ENCODE measurements at regions of chr16 and their contacts with region 1.

Region 1: DNA sequence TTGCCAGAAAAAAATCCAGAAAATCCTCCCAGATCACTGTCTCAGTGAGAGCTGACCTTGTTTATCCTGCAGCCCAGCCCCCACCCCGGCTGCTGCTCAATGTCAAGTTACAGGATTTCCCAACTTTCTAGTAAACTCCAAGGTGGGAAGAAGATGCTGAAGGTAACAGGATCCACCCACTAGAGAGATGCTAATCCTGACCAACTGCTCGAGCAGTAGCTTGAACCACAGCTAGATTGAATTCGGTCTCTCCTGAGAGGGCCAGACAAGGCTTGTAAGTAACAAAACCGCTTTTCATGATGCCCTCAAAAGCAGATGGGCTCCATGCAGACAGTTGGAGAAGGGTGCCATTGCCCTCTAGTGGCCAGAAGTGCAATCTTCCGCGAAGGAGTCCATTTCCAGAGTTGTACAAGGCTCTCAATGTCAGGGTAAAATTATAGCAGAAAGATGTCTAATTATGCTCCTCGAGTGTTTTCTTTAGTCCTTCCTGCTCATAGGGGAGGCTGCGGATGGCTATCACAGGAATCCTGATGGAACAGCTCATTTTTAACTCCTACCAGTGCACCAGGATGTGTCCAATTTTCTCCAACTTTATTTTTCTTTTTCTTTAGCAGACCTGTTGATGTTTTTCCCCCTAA is 3.9 kb downstream of the CDH11 start:
- DNase-seq: no peak
- ATAC-seq: peak; percentile 56

Region 2: DNA sequence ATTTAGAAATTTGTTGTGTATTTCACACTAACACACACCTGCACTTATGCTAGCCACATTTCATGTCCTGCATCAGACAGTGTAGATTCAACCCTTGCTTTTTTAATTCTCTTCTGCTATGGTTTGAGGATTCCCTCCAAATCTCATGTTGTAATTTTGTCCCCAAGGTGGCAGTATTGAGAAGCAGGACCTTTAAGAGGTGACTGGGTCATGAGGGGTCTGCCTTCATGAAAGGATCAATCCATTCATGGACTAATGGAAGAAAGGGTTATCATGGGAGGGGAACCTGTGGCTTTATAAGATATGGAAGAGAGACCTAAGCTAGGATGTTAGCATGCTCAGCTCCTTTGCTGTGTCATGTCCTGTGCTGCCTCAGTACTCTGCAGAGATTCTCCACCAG is 1028.2 kb before region 1 on chr16:
- intact Hi-C with region 1: loop called (anchors 2 kb)
- DNase-seq: no peak
- ATAC-seq: no peak

Region 3: DNA sequence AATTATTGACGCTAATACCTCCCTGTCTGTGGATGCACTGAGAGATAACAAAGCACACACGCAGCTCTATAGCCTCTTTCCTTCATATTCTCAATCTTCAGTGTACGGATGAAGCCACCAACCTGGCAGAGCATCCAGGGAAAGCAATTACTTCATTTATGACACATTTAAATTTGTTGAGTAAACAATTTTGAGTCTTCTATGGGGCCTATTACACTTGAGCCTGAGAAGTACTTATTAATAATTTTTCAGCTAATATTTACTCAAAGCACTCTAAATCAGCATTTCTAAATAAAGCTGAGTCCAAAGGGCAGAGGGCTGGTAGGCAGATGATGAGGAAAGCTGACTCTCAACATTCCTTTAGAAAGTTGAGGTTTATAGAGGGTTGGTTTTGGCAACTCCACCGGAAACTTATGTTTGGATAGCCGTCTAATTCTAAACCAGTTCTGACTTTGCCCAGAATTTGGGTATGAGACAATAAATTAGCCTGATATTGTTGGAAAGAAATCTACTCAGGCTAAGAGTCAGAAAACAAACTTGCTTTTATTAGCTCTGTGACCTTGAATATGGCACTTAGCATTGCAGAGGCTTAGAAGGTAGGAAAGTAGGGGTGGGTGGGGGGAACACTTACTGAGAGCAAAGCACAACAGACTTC is 639.6 kb before region 1 on chr16:
- intact Hi-C with region 1: loop called (anchors 10 kb)
- DNase-seq: no peak
- ATAC-seq: no peak

Region 4: GRCh38 chr16:65315081-65315780 is 197.3 kb after region 1 on chr16:
- intact Hi-C with region 1: loop called (anchors 10 kb)
- DNase-seq: peak; percentile 81
- ATAC-seq: peak; percentile 93

Region 5: GRCh38 chr16:66270333-66270927 is 1152.5 kb after region 1 on chr16:
- intact Hi-C with region 1: loop called (anchors 5 kb)
- DNase-seq: peak; percentile 89
- ATAC-seq: peak; percentile 72